GM18951 (cell line): ENCODE measurements at regions of chr20 and their contacts with region 1.

Region 1: GRCh38 chr20:62793912-62794724 is 2.2 kb upstream of the MRGBP start:
- POLR2A ChIP-seq: peak; percentile 75

Region 2: DNA sequence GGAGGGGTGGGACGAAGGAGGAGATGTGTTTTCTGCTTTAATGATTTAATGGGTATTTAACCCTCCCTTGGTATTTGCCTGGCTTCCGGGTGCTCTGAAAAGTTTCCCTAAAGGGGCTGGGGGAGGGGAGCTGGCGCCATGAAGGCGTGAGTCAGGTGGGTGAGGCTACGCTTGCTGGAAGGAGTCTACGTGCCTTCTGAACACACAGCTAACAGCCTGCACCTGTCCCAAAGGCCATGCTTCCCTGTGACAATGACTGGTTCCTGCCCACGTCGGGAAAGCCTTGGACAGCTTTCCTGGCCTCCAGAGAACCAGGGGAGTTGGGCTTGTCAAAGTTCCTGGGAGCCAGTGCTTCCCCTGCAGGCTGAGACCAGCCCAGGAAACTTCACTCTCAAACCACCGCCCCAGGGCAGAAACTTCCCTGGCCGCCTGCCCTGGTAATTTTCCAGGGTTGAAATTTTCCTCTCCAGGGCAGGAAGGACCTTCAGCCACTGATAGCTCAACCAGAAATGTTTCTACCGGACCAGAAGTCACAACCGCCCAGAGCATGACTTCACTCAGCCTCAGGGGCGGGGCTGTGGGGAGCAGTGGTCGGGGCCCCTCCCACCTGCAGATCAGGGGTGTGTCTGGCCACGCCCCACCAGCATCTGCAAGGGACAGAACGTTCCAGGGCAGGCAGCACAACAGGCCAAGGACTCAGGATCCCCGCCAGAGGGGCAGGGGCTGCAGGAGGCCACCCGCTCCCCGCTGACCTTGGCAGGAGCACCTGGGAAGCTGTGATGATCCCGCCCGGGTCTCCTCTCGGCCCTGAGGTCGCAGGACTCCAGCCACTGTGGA is 170.4 kb before region 1 on chr20:
- in situ Hi-C with region 1: no loop called
- POLR2A ChIP-seq: peak; percentile 50

Region 3: GRCh38 chr20:62652051-62652926 is 141.8 kb before region 1 on chr20:
- in situ Hi-C with region 1: loop called (anchors 25 kb)
- POLR2A ChIP-seq: peak; percentile 53

Region 4: GRCh38 chr20:62952373-62952967 is 158.4 kb after region 1 on chr20 and contains the start of gene SLC17A9:
- in situ Hi-C with region 1: no loop called
- POLR2A ChIP-seq: peak; percentile 78